ENCODE measurements at regions of chr19 and their contacts with region 1.

Region 1: GRCh38 chr19:6842871-6843607 is 44.3 kb upstream of the ADGRE1 start:
- DNase-seq: no peak
- ATAC-seq: no peak
- H3K4me3 ChIP-seq: no peak overlapping the region
- H3K4me3 Mint-ChIP-seq: no peak overlapping the region
- H3K27ac ChIP-seq: no peak overlapping the region
- H3K27ac Mint-ChIP-seq: peak overlapping the region; percentile 65 to 75
- H3K4me1 ChIP-seq: no peaks in the 10 kb centered on the region
- H3K4me1 Mint-ChIP-seq: peaks cover 0 to 4% (median 3%) of the 10 kb centered on the region in 3 donors
- H3K27me3 ChIP-seq: no peaks in the 10 kb centered on the region
- H3K27me3 Mint-ChIP-seq: no peaks in the 10 kb centered on the region

Region 2: DNA sequence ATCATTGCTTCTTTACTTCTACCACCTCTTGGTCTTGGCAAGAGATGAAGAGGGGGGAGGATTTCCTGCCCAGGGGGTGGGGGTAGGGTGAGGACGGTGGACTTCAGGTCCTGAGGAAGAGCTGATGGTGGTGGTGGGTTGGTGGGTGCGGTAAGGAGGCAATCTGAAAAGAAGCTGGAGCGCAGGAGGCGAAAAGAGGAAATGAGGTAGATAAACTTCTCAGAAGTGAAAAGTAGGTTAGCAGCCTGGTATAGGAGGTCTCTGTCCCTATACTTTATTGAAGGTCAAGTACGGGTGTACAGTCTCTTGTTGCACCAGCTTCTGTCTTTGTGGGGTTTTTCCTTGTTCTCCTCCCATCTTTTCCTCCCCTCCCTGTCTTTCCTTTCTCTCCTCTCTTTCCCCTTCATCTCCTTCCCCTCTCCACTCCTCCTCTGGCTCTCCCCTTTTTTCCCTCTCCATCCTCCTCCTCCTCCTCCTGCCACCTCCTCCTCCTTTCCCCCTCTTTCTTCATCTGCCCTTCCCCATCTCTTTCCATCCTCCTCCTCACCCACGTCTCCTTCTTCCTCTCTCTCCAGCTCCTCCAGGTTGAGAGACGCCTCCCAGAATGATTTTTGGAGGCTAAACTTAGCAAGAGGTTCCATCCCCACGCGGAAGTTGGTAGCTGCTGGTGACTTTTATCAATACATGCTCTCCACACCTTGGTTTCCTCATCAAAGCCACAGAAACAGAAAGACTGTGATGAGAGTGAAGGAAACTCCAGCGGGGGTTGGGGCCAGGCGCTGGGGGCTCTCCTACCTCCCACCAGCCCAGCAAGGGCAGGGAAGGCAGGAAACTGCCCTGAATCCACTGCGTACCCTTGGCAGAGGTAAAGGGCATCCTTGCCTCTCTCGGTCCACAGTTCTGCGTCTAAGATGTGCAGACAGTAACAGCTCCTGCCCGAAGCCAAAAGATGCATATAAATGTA is 188.4 kb before region 1 on chr19:
- CTCF ChIA-PET with region 1: no interaction called
- POLR2A ChIA-PET with region 1: interaction called in 1 of 2 experiments, 14 read pairs
- DNase-seq: peak in 19 of 35 experiments; percentile 21 to 68 (median 29)
- ATAC-seq: peak; percentile 62 to 79 (median 76)
- H3K4me3 ChIP-seq: peak overlapping the region in 1 of 2 donors; percentile 36
- H3K4me3 Mint-ChIP-seq: peak overlapping the region; percentile 67 to 82 (median 75)
- H3K27ac ChIP-seq: peak overlapping the region; percentile 82
- H3K27ac Mint-ChIP-seq: peak overlapping the region; percentile 95 to 96
- H3K4me1 ChIP-seq: peaks cover 11 to 43% of the 10 kb centered on the region in 2 experiments
- H3K4me1 Mint-ChIP-seq: peaks cover 25 to 46% (median 29%) of the 10 kb centered on the region in 3 donors
- H3K27me3 ChIP-seq: no peaks in the 10 kb centered on the region
- H3K27me3 Mint-ChIP-seq: no peaks in the 10 kb centered on the region

Region 3: GRCh38 chr19:7441468-7442146 is 598.6 kb after region 1 on chr19:
- CTCF ChIA-PET with region 1: interaction called in 1 of 2 experiments, 14 read pairs
- POLR2A ChIA-PET with region 1: no interaction called
- DNase-seq: no peak
- ATAC-seq: no peak
- H3K4me3 ChIP-seq: no peak overlapping the region
- H3K4me3 Mint-ChIP-seq: no peak overlapping the region
- H3K27ac ChIP-seq: no peak overlapping the region
- H3K27ac Mint-ChIP-seq: no peak overlapping the region
- H3K4me1 ChIP-seq: no peaks in the 10 kb centered on the region
- H3K4me1 Mint-ChIP-seq: no peaks in the 10 kb centered on the region
- H3K27me3 ChIP-seq: no peaks in the 10 kb centered on the region
- H3K27me3 Mint-ChIP-seq: no peaks in the 10 kb centered on the region